ENCODE measurements at regions of chr12 and their contacts with region 1.

Region 1: GRCh38 chr12:16165506-16165905 is 112.0 kb downstream of the SLC15A5 start:
- DNase-seq: no peak
- ATAC-seq: peak; percentile 87

Region 2: GRCh38 chr12:16076553-16076952 is 89.0 kb before region 1 on chr12:
- intact Hi-C with region 1: no loop called
- DNase-seq: no peak
- ATAC-seq: no peak

Region 3: GRCh38 chr12:16359512-16360491 is 194.3 kb after region 1 on chr12:
- intact Hi-C with region 1: loop called (anchors 2 kb)
- DNase-seq: peak; percentile 80
- ATAC-seq: peak; percentile 71

Measured in Right ventricle myocardium inferior (tissue), 1 donor.